ENCODE measurements at regions of chr12 and their contacts with region 1.

Region 1: GRCh38 chr12:121894633-121895032 is 6.0 kb downstream of the PSMD9 start:
- DNase-seq: peak in 4 of 5 donors; percentile 37 to 63 (median 48)
- H3K4me3 ChIP-seq: no peak overlapping the region
- H3K27ac ChIP-seq: no peak overlapping the region
- H3K4me1 ChIP-seq: peaks cover 5% of the 10 kb centered on the region
- H3K27me3 ChIP-seq: no peaks in the 10 kb centered on the region
- CTCF ChIP-seq: peak in 2 of 3 donors; percentile 9 to 49
- EP300 ChIP-seq: no peak
- POLR2A ChIP-seq: no peak

Region 2: GRCh38 chr12:121839106-121839992 is 55.3 kb before region 1 on chr12:
- intact Hi-C with region 1: loop called in 1 of 4 experiments (anchors 10 kb)
- DNase-seq: peak; percentile 100
- H3K4me3 ChIP-seq: peak overlapping the region; percentile 51
- H3K27ac ChIP-seq: no peak overlapping the region
- H3K4me1 ChIP-seq: peaks cover 1% of the 10 kb centered on the region
- H3K27me3 ChIP-seq: no peaks in the 10 kb centered on the region
- CTCF ChIP-seq: peak; percentile 35 to 61 (median 59)
- EP300 ChIP-seq: no peak
- POLR2A ChIP-seq: peak; percentile 29

Region 3: GRCh38 chr12:121858662-121859572 is 35.7 kb before region 1 on chr12 and contains the start of gene HPD:
- intact Hi-C with region 1: no loop called
- DNase-seq: peak; percentile 86 to 92 (median 89)
- H3K4me3 ChIP-seq: no peak within 1 kb of the TSS
- H3K27ac ChIP-seq: peak within 1 kb of the TSS; percentile 69 to 92
- H3K4me1 ChIP-seq: peaks cover 12% of the 10 kb centered on the region
- H3K27me3 ChIP-seq: no peaks in the 10 kb centered on the region
- CTCF ChIP-seq: no peak
- EP300 ChIP-seq: peak; percentile 31
- POLR2A ChIP-seq: peak; percentile 18
- total RNA-seq, gene HPD: 1.2 to 7.2 (median 4.4) TPM